Heart right ventricle (tissue), 16 donors: ENCODE measurements at regions of chr19 and their contacts with region 1.

Region 1: GRCh38 chr19:5057861-5058260 is 88.9 kb downstream of the KDM4B start:
- DNase-seq: no peak
- ATAC-seq: no peak
- H3K4me3 ChIP-seq: no peak overlapping the region
- H3K27ac ChIP-seq: no peak overlapping the region
- H3K4me1 ChIP-seq: peaks cover 4 to 41% (median 28%) of the 10 kb centered on the region in 9 donors
- H3K27me3 ChIP-seq: no peaks in the 10 kb centered on the region
- CTCF ChIP-seq: no peak

Region 2: DNA sequence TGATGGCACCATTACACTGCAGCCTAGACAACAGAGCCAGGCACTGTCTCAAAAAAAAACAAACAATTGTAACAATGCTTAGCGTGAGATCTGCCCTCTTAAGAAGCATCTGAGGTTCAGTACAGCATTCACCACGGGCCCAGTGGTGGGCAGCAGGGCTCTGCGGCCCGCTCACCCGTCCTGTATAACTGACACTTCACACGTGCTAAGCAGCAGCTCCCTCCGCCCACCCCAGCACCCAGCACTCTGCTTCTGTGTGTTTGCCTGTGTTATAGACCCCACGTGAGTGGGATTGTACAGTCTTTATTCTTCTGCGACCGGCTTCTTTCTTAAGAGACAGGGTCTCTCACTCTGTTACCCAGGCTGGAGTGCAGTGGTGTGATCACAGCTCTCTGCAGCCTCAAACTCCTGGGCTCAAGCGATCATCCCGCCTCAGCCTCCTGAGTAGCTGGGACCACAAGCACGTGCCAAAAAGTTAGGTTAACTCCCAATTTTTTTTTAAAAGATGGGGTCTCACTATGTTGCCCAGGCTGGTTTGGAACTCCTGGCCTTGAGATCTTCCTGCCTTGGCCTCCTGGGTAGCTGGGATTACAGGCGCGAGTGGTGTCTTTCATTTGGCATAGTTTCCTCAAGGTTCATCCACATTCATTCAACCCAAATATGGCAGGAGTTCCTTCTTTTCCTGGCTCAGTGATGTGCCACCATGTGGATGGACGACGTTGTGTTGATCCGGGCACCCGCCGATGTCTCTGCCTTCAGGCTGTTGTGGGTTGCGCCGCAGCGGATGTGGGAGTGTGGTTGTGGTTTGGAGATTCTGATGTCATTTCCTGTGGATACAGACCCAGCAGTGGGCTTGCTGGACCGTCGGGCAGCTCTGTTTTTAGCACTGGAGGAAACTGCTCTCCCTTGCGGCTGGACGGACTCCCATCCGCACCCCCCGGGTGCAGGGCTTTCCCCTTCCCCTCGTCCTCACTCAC is 81.0 kb after region 1 on chr19:
- intact Hi-C with region 1: loop called in 3 of 10 experiments (anchors 10 kb)
- DNase-seq: peak; percentile 57 to 62
- ATAC-seq: peak in 4 of 8 donors; percentile 13 to 62 (median 46)
- H3K4me3 ChIP-seq: no peak overlapping the region
- H3K27ac ChIP-seq: no peak overlapping the region
- H3K4me1 ChIP-seq: peaks cover 0 to 27% (median 13%) of the 10 kb centered on the region in 9 donors
- H3K27me3 ChIP-seq: no peaks in the 10 kb centered on the region
- CTCF ChIP-seq: no peak

Region 3: DNA sequence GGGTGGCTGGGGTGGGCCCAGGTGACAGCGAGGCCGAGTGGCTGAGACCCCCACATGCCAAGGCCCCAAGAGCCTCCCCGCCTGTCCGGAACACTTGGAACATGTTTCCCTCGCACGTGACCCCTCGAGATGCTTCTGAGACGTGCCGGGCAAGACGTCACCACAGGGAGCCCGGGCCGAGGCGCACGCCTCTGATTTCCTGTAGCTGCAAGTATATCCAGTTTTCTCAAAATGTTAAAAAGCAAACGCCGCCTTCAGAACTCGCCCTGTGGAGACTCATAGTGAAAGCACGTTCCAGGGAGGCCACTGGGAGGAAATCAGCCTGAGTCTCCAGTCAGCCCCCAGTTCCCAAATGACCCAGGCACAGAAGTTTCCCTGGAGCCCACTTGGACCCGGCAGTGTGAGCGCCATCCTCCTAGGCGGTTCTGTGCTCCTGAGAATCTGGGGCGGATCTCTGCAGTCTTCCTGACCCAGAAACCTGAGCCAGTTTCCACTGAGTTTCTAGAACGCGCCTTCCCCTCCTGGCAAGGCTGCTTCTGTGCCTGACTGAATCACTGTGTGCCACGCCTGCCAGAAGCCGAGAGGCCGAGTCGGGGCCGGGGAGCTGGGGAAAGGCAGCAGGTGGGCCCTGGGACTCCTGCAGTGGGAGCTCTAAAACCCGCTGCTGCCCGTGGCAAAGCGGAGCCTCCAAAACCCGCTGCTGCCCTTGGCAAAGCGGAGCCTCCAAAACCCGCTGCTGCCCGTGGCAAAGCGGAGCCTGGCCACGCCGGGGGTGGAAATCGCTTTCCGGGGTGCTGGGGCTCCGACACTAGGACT is 90.3 kb after region 1 on chr19:
- intact Hi-C with region 1: loop called in 2 of 10 experiments (anchors 10 kb)
- DNase-seq: peak in 1 of 2 donors; percentile 25
- ATAC-seq: no peak
- H3K4me3 ChIP-seq: no peak overlapping the region
- H3K27ac ChIP-seq: no peak overlapping the region
- H3K4me1 ChIP-seq: no peaks in the 10 kb centered on the region
- H3K27me3 ChIP-seq: no peaks in the 10 kb centered on the region
- CTCF ChIP-seq: no peak

Region 4: DNA sequence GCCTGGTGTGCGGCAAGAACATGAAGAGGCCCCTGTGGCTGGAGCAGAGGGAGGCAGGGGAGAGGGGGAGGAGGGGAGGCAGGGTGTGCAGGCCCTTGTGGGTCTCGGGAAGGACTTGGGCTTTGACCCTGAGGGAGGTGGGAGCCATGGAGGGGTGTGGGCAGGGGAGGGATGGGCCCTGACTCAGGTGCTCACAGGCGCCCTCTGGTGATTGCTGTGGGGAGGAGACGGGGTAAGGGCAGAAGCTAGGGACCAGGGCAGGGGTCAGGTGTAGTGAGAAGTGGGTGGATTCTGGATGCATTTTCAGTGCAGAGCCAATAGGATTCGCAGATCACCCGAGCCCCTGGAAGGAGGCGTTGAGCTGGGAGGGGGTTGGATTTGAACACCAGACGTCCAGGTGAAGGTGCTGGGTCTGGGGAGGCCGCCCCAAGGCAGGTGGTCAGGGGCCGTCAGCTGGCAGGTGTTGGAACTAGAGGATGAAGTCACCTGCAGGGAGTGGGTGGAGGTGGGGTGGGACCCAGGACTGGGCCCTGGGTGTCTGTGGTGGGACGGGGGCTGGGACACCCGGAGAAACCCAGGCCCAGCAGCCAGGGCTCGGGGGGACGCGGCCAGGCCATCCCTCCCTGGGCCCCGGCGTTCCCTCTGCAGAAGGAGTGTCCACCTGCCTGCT is 96.4 kb after region 1 on chr19:
- intact Hi-C with region 1: loop called in 2 of 10 experiments (anchors 10 kb)
- DNase-seq: peak in 1 of 2 donors; percentile 34
- ATAC-seq: peak in 6 of 8 donors; percentile 17 to 61 (median 34)
- H3K4me3 ChIP-seq: no peak overlapping the region
- H3K27ac ChIP-seq: no peak overlapping the region
- H3K4me1 ChIP-seq: peaks cover 0 to 10% (median 0%) of the 10 kb centered on the region in 9 donors
- H3K27me3 ChIP-seq: no peaks in the 10 kb centered on the region
- CTCF ChIP-seq: peak in 7 of 9 donors; percentile 36 to 55 (median 44)